Motor neuron (in vitro differentiated cells): ENCODE measurements at regions of chr7 and their contacts with region 1.

Region 1: DNA sequence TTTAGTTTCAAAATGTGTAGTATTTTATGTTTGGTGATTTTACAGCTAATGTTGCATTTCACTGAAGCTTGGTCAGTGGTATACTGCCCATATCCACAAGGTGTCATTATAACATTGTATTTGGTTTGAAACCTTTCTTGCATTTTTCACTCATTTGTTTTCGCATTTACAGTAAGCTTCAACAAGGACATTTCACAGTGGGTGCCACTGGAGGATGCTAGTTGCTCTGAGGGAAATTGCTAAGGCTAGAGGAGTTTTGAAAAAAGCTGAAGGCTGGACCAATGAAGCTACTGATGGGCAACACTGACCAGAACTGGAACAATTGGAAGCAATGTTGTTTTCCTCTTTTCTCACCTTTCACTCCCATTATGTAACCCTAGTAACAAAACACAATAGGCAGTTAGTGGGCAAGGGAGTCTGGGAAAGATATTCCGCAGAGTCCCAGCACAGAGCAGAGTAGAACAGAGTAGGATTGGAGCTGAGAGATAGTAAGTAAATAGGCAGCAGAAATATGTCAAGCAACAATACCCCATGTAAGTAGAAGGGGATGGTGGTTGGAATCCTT is 23.6 kb upstream of the SRI start:
- ATAC-seq: peak; percentile 92 to 96 (median 94)
- H3K4me3 ChIP-seq: no peak overlapping the region
- H3K27ac ChIP-seq: no peak overlapping the region
- H3K4me1 ChIP-seq: peaks cover 0 to 4% of the 10 kb centered on the region in 2 donors

Region 2: DNA sequence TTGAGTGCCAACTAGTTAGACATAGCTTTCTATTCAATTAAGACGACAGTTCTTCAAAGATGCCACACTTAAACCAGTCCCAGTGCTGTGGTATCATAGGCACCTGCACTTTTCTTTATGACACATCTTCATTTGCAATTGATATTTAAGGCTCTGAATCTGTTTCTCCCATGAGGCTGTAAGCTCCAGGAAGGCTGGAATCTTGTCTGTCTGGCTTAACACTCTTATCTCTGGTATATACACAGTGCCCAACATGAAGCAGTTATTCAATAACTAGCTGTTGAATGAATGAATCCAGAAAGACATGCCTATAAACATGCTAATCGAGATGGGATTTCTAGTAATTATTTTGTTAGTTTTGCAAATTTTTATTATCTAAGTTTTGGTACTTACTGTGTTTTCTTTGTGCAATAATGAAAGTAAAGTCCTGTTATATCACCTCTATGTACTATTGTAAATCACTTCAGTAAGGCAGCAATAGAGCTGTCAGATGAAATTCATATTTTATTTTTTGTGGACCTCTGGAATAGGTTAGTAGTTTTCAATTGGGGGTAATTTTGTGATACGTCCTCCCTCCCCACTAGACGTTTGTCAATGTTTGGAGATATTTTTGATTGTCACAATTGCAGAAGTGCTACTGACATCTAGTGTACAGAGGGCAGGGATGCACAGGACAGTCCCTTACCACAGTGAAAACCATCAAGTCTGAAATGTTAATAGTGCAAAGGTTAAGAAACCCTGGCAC is 114.5 kb after region 1 on chr7:
- in situ Hi-C with region 1: loop called in 1 of 9 experiments (anchors 25 kb)
- ATAC-seq: peak in 3 of 8 experiments; percentile 58 to 79 (median 73)
- H3K4me3 ChIP-seq: no peak overlapping the region
- H3K27ac ChIP-seq: no peak overlapping the region
- H3K4me1 ChIP-seq: no peaks in the 10 kb centered on the region

Region 3: DNA sequence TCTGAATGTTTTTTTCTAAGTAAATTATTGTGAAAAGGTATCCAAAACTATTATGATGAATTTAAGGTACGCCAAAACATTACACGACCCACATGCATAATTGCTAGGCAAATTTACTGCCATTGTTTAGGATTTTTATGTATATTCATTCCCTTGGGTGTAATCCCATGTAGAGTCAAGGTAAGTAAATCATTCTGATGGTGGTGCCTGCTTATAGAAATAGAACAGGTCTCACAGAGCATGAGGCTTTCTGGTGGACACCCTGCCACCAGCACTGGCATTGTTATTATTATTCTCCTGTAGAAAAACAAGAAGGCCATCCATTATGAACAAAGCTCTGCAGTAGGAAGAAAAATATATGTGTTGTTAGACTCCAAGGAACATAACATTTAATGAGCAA is 404.4 kb after region 1 on chr7:
- in situ Hi-C with region 1: no loop called
- ATAC-seq: peak in 4 of 8 experiments; percentile 70 to 99 (median 82)
- H3K4me3 ChIP-seq: no peak overlapping the region
- H3K27ac ChIP-seq: no peak overlapping the region
- H3K4me1 ChIP-seq: peaks cover 0 to 16% of the 10 kb centered on the region in 2 donors

Region 4: GRCh38 chr7:90119178-90119971 is 1875.9 kb after region 1 on chr7:
- in situ Hi-C with region 1: loop called in 2 of 9 experiments (anchors 25 kb)
- ATAC-seq: peak; percentile 64 to 98 (median 94)
- H3K4me3 ChIP-seq: peak overlapping the region; percentile 51 to 71 (median 58)
- H3K27ac ChIP-seq: peak overlapping the region; percentile 2 to 7
- H3K4me1 ChIP-seq: peaks cover 0 to 5% of the 10 kb centered on the region in 2 donors